IMR-90 (cell line): ENCODE measurements at regions of chr3 and their contacts with region 1.

Region 1: GRCh38 chr3:122555275-122556071 is 8.6 kb downstream of the PARP9 start:
- DNase-seq: peak; percentile 57
- ATAC-seq: peak; percentile 79
- H3K4me3 ChIP-seq: no peak overlapping the region
- H3K27ac ChIP-seq: no peak overlapping the region
- H3K4me1 ChIP-seq: peaks cover 3% of the 10 kb centered on the region; the same call in 1 of the 2 replicates
- H3K27me3 ChIP-seq: no peaks in the 10 kb centered on the region
- CTCF ChIP-seq: no peak
- POLR2A ChIP-seq: no peak
- RAD21 ChIP-seq: no peak

Region 2: DNA sequence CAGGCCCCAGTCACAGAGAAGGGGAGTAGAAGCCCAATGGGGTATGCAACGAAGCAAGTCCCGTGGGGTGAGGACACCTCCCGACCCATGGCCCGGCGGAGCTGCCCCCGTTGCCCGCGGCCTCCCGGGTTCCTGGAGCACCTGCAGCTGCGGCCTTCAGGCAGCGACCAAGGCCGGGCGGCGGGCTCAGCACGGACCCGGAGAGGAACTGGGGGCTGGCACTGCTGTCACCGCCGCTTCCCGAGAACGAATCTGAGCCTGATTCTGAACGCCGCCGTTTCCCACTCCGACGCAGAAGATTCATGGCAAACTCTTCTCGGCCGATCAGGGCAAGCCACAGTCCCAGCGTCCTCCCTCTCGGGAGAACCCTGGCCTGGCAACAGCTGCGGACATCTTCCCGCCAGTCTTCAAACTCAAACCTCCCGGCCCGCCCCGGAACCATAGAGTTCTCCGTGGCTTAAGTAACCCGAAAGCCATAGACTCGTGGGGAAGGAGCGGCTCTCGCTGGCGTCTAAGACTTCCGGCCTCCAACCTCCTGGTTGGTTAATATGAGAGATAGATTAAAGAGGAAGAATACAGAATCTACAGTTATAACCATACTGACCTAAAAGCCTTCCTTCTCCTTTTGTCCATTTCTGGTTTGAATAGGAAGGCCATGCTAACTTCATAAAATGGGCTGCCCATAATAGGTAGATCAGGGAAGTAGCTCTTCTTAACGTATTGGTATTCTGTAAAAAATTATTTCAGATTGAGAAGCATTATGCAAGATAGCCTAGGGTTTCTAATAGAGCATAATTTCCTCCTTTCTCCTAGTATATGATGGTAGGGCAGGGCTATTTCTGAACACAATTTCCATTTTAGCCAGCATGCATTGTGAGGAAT is 1009.7 kb before region 1 on chr3 and contains the start of gene POLQ:
- CTCF ChIA-PET with region 1: no interaction called
- POLR2A ChIA-PET with region 1: no interaction called
- dilution Hi-C with region 1: no loop called
- in situ Hi-C with region 1: no loop called
- intact Hi-C with region 1: no loop called
- DNase-seq: peak; percentile 95
- ATAC-seq: peak; percentile 96
- H3K4me3 ChIP-seq: peak within 1 kb of the TSS; percentile 69
- H3K27ac ChIP-seq: peak within 1 kb of the TSS; percentile 53
- H3K4me1 ChIP-seq: no peaks in the 10 kb centered on the region
- H3K27me3 ChIP-seq: no peaks in the 10 kb centered on the region
- CTCF ChIP-seq: no peak
- POLR2A ChIP-seq: peak; percentile 66; the same call in 1 of the 2 replicates
- RAD21 ChIP-seq: no peak
- total RNA-seq, gene POLQ: 5.0 and 7.5 TPM in 2 replicates

Region 3: DNA sequence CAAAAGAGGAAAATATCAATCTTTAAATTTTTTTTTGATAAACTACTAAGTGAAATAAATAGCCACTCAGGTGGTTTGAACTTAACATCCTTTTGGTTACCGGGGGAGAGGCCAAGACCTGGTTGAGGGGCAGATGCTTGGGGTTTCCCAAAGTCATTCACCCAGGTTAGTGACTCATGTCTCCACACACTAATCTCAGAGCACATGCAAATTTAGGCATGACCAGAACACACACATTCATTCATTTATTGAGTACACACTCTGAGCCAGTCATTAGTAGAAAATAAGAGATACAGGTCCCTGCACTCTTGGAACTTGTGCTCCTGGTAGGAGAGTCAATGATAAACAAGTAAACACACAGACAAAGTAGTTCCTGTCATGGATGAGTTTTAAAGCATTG is 540.7 kb before region 1 on chr3:
- CTCF ChIA-PET with region 1: no interaction called
- POLR2A ChIA-PET with region 1: no interaction called
- dilution Hi-C with region 1: no loop called
- in situ Hi-C with region 1: no loop called
- intact Hi-C with region 1: no loop called
- DNase-seq: no peak
- ATAC-seq: no peak
- H3K4me3 ChIP-seq: no peak overlapping the region
- H3K27ac ChIP-seq: no peak overlapping the region
- H3K4me1 ChIP-seq: no peaks in the 10 kb centered on the region
- H3K27me3 ChIP-seq: peaks cover 11% of the 10 kb centered on the region
- CTCF ChIP-seq: no peak
- POLR2A ChIP-seq: no peak
- RAD21 ChIP-seq: no peak

Region 4: DNA sequence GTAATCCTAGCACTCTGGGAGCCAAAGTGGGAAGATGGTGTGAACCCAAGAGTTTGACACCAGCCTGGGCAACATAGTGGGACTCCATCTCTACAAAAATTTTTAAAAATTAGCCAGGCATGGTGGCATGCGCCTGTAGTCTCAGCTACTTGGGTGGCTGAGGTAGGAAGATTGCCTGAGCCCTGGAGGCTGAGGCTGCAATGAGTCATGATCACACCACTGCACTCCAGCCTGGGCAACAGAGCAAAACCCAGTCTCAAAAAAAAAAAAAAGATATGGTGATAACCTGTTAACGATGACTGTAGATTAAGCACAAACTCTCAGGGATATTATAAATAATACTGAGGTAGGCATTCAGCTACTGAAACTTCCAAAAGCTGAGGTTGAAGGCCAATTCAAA is 346.9 kb after region 1 on chr3:
- CTCF ChIA-PET with region 1: no interaction called
- POLR2A ChIA-PET with region 1: interaction called, 12 read pairs
- dilution Hi-C with region 1: no loop called
- in situ Hi-C with region 1: no loop called
- intact Hi-C with region 1: no loop called
- DNase-seq: no peak
- ATAC-seq: no peak
- H3K4me3 ChIP-seq: no peak overlapping the region
- H3K27ac ChIP-seq: no peak overlapping the region
- H3K4me1 ChIP-seq: no peaks in the 10 kb centered on the region
- H3K27me3 ChIP-seq: peaks cover 26% of the 10 kb centered on the region
- CTCF ChIP-seq: no peak
- POLR2A ChIP-seq: no peak
- RAD21 ChIP-seq: no peak